Body of pancreas (tissue), 4 donors: ENCODE measurements at regions of chr9 and their contacts with region 1.

Region 1: GRCh38 chr9:123081824-123082223 is 48.4 kb downstream of the GPR21 start:
- DNase-seq: no peak
- ATAC-seq: peak; percentile 50
- H3K4me3 ChIP-seq: no peak overlapping the region
- H3K27ac ChIP-seq: no peak overlapping the region
- H3K4me1 ChIP-seq: no peaks in the 10 kb centered on the region
- H3K27me3 ChIP-seq: no peaks in the 10 kb centered on the region
- CTCF ChIP-seq: peak in 6 of 7 experiments; percentile 10 to 64 (median 54)
- POLR2A ChIP-seq: no peak

Region 2: DNA sequence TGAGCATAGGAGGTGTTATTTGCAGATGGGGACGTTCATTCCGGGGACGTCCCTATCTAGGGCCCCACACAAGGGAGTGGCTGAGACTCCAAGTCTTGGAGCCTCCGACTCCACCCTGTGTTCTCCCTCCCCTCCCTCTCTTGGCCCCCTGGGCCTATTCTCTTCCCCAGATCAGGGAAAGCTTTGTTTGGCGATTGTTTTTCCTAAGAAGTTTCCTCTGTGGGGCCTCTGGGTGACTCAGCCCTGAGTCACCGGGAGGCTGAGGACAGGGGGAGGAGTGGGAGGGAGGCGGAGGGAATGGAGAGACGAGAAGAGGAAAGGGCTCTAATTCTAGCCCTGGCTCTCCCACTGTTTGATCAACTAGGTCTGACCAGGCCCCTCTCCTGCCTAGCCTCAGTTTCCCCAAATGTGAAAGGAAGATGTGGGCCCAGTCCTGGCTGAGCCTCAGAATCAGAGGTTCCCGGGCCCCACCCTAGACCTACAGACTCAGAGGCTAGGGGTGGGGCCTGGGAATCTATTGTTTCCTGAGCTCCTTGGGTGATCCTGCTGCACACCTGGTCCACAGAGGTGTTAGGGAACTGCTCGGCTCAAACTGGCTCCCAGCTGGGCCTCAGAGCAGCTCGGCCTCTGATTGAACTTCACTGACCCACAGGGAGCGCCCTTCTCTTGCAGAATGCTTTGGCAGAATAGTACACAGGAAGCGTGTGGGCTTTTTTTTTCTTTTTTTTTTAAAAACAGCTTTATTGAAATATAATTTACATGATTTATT is 1794.7 kb before region 1 on chr9:
- intact Hi-C with region 1: no loop called
- DNase-seq: peak; percentile 58 to 86 (median 71)
- ATAC-seq: peak; percentile 67
- H3K4me3 ChIP-seq: no peak overlapping the region
- H3K27ac ChIP-seq: peak overlapping the region; percentile 85 to 93 (median 88)
- H3K4me1 ChIP-seq: peaks cover 63% of the 10 kb centered on the region
- H3K27me3 ChIP-seq: no peaks in the 10 kb centered on the region
- CTCF ChIP-seq: no peak
- POLR2A ChIP-seq: peak in 1 of 3 donors; percentile 15

Region 3: DNA sequence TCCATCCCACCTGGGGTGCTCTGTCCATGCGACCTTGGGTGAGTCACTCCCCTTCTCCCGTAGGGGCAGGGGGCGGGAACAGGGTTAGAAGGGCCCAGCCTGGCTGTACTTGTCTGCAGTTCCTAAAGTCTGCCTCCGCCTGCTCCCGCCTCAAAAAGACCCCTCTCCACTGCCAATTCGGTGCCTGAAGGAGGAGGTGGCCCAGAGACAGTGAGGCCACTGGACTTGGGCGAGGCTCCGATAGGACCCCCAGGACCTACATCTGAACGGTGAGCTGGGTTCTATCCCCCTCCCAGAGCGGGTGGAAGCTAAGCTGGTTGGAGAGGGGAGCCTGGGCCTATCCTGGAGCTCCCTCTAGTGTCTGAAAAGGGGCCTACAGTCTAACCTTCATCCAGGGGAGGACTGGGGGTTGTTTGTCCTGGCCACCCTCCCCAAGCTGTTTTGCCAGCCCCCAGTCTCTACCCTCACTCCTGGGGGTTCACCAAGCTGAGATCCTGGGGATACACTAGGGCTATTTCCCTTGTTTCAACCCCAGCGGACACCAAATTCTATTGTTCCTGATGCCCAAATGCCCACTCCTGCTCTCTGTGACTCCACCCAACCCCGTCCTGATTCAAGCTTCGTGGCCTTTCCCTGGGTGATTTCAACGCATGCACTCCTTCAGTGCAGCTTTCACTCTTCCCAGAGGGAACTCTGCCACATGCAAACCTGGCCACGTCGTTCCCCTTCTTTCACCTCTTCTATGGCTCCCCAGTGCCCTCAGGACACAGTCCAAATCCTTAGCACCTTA is 268.1 kb after region 1 on chr9:
- intact Hi-C with region 1: loop called (anchors 10 kb)
- DNase-seq: peak; percentile 55 to 64 (median 58)
- ATAC-seq: peak; percentile 67
- H3K4me3 ChIP-seq: no peak overlapping the region
- H3K27ac ChIP-seq: no peak overlapping the region
- H3K4me1 ChIP-seq: peaks cover 5% of the 10 kb centered on the region
- H3K27me3 ChIP-seq: no peaks in the 10 kb centered on the region
- CTCF ChIP-seq: peak; percentile 88 to 99 (median 94)
- POLR2A ChIP-seq: no peak